ENCODE measurements at regions of chr7 and their contacts with region 1.

Region 1: GRCh38 chr7:41705109-41705901 is 2.4 kb upstream of the INHBA start:
- DNase-seq: peak; percentile 96
- H3K4me3 ChIP-seq: peak overlapping the region; percentile 55 to 73
- H3K27ac ChIP-seq: peak overlapping the region; percentile 92 to 93
- H3K4me1 ChIP-seq: peaks cover 23 to 24% of the 10 kb centered on the region in 2 experiments
- H3K27me3 ChIP-seq: no peaks in the 10 kb centered on the region
- CTCF ChIP-seq: peak; percentile 98
- EP300 ChIP-seq: peak in 1 of 2 experiments; percentile 48; a peak in 1 of 4 replicates
- RAD21 ChIP-seq: peak; percentile 92

Region 2: DNA sequence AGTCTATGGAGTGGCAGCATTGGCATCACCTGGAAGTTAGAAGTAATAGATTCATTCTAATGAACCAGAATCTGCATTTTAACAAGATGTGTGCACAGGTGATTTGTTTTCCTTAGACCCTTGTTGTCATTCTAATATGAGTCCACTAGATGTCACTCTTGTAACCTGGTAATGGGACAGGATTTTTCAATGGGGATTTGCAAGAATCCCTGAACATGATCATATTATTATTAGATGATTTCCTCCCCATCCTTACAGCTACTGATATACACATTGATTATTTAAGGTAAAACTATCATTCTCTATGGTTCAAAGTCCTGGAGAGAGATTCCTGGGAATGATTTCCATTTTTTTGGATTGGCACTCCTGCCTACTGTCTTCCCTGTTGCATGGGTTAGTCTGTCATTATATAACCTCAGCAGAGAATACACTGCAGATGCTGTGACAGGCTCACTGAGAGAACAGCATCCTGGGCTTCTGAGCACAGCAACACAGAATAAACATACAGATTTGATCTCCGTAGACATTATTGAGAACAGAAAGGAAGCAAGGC is 1375.6 kb before region 1 on chr7:
- CTCF ChIA-PET with region 1: interaction called, 96 read pairs
- POLR2A ChIA-PET with region 1: no interaction called
- DNase-seq: peak; percentile 73
- H3K4me3 ChIP-seq: no peak overlapping the region
- H3K27ac ChIP-seq: peak overlapping the region; percentile 83 to 96
- H3K4me1 ChIP-seq: peaks cover 12 to 17% of the 10 kb centered on the region in 2 experiments; a peak in 3 of 4 replicates
- H3K27me3 ChIP-seq: no peaks in the 10 kb centered on the region
- CTCF ChIP-seq: peak; percentile 95
- EP300 ChIP-seq: peak; percentile 52 to 53; a peak in 2 of 4 replicates
- RAD21 ChIP-seq: peak; percentile 99

Region 3: GRCh38 chr7:40763318-40764287 is 941.7 kb before region 1 on chr7:
- CTCF ChIA-PET with region 1: interaction called, 26 read pairs
- POLR2A ChIA-PET with region 1: no interaction called
- DNase-seq: peak; percentile 8
- H3K4me3 ChIP-seq: no peak overlapping the region
- H3K27ac ChIP-seq: peak overlapping the region; percentile 39 to 86
- H3K4me1 ChIP-seq: peaks cover 11 to 14% of the 10 kb centered on the region in 2 experiments; a peak in 3 of 4 replicates
- H3K27me3 ChIP-seq: no peaks in the 10 kb centered on the region
- CTCF ChIP-seq: peak; percentile 44
- EP300 ChIP-seq: no peak; a peak in 2 of 4 replicates
- RAD21 ChIP-seq: peak; percentile 75

Region 4: DNA sequence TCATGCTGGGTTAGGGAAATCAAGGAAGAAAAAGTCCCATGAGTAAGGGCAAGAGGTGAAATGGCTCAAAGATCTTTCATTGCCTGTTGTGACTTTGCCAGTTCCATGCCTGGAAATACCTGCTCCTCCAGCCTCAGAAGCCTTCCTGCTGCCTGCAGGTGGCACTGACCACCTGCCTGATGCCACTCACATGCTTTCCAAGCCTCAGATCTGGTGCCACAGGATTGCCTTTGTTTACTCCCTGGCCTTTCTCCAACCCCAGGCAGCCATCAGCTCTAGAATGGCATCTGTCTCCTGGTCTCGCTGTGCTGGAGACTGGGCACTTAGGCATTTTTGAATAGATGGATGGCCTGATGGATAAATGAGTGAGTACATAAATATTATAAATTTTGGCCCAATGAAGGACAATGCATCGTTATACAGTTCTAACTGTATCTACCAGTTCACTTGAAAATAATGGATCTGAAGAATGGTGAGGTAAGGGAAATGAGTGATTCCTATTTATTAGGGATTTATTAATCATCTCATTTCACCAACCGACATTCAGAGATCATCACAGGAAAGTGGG is 659.7 kb before region 1 on chr7:
- CTCF ChIA-PET with region 1: interaction called, 20 read pairs
- POLR2A ChIA-PET with region 1: no interaction called
- DNase-seq: no peak
- H3K4me3 ChIP-seq: no peak overlapping the region
- H3K27ac ChIP-seq: peak overlapping the region in 1 of 2 experiments; percentile 37; a peak in 1 of 4 replicates
- H3K4me1 ChIP-seq: peaks cover 10 to 19% of the 10 kb centered on the region in 2 experiments; a peak in 3 of 4 replicates
- H3K27me3 ChIP-seq: no peaks in the 10 kb centered on the region
- CTCF ChIP-seq: peak; percentile 32
- EP300 ChIP-seq: no peak
- RAD21 ChIP-seq: peak; percentile 67

Region 5: GRCh38 chr7:41437257-41438196 is 267.8 kb before region 1 on chr7:
- CTCF ChIA-PET with region 1: interaction called, 10 read pairs
- POLR2A ChIA-PET with region 1: no interaction called
- DNase-seq: no peak
- H3K4me3 ChIP-seq: no peak overlapping the region
- H3K27ac ChIP-seq: no peak overlapping the region
- H3K4me1 ChIP-seq: peaks cover 0 to 12% of the 10 kb centered on the region in 2 experiments; a peak in 2 of 4 replicates
- H3K27me3 ChIP-seq: no peaks in the 10 kb centered on the region
- CTCF ChIP-seq: no peak
- EP300 ChIP-seq: no peak
- RAD21 ChIP-seq: no peak

Region 6: DNA sequence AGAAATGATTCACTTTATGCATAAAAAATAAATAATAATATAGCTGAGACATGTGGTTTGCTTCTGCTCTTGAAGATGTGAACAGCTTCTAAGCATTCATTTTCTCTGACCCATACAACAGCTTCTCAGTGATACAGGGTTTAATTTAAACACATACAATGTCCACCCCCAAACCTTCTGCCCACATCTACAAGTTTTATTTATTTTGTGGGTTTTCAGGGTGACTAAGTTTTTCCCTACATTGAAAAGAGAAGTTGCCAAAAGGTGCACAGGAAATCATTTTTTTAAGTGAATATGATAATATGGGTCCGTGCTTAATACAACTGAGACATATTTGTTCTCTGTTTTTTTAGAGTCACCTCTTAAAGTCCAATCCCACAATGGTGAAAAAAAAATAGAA is 19.6 kb before region 1 on chr7:
- CTCF ChIA-PET with region 1: interaction called, 16 read pairs
- POLR2A ChIA-PET with region 1: no interaction called
- DNase-seq: no peak
- H3K4me3 ChIP-seq: no peak overlapping the region
- H3K27ac ChIP-seq: peak overlapping the region in 1 of 2 experiments; percentile 52; a peak in 2 of 4 replicates
- H3K4me1 ChIP-seq: peaks cover 0 to 7% of the 10 kb centered on the region in 2 experiments; a peak in 1 of 4 replicates
- H3K27me3 ChIP-seq: no peaks in the 10 kb centered on the region
- CTCF ChIP-seq: no peak
- EP300 ChIP-seq: no peak
- RAD21 ChIP-seq: no peak

Region 7: GRCh38 chr7:41731492-41732435 is 26.5 kb after region 1 on chr7:
- CTCF ChIA-PET with region 1: interaction called, 16 read pairs
- POLR2A ChIA-PET with region 1: no interaction called
- DNase-seq: no peak
- H3K4me3 ChIP-seq: no peak overlapping the region; a peak in 1 of 4 replicates
- H3K27ac ChIP-seq: no peak overlapping the region
- H3K4me1 ChIP-seq: peaks cover 0 to 4% of the 10 kb centered on the region in 2 experiments; a peak in 1 of 4 replicates
- H3K27me3 ChIP-seq: no peaks in the 10 kb centered on the region
- CTCF ChIP-seq: peak; percentile 84
- EP300 ChIP-seq: no peak
- RAD21 ChIP-seq: peak; percentile 77